ENCODE measurements at regions of chr18 and their contacts with region 1.

Region 1: DNA sequence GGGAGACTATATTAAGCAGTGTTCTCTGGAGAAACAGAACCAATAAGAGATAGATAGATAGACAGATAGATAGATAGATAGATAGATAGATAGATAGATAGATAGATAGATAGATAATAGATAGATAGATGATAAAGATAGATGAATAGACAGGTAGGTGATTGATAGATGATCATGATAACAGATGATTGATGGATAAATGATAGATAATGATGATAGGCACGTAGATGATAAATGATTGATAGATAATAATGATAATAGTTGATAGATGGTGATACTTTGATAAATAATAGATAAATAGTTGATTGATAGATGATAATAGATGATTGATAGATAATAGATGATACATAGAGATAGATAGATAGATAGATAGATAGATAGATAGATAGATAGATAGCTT is 48.5 kb downstream of the BOD1L2 start:
- DNase-seq: no peak
- ATAC-seq: no peak
- H3K4me3 ChIP-seq: no peak overlapping the region
- H3K4me3 Mint-ChIP-seq: no peak overlapping the region
- H3K27ac ChIP-seq: no peak overlapping the region
- H3K27ac Mint-ChIP-seq: no peak overlapping the region
- H3K4me1 ChIP-seq: no peaks in the 10 kb centered on the region
- H3K4me1 Mint-ChIP-seq: no peaks in the 10 kb centered on the region
- H3K27me3 ChIP-seq: peaks cover 0 to 23% (median 9%) of the 10 kb centered on the region in 4 experiments
- H3K27me3 Mint-ChIP-seq: peaks cover 37% of the 10 kb centered on the region
- CTCF ChIP-seq: no peak

Region 2: DNA sequence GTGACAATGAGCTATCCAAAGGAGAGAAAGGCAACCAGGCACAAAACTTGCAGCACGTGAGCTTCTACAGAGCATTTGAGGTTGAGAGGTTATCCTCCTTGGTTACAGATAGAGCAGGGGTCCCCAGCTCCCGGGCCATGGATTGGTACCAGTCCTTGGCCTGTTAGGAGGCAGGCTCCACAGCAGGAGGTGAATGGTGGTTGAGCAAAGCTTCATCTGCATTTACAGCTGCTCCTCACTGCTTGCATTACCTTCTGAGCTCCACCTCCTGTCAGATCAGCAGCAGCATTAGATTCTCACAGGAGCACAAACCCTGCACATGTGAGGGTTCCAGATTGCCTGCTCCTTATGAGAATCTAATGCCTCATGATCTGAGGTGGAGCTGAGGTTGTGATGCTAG is 99.2 kb after region 1 on chr18:
- CTCF ChIA-PET with region 1: no interaction called
- POLR2A ChIA-PET with region 1: no interaction called
- intact Hi-C with region 1: no loop called
- DNase-seq: no peak
- ATAC-seq: no peak
- H3K4me3 ChIP-seq: no peak overlapping the region
- H3K4me3 Mint-ChIP-seq: no peak overlapping the region
- H3K27ac ChIP-seq: no peak overlapping the region
- H3K27ac Mint-ChIP-seq: no peak overlapping the region
- H3K4me1 ChIP-seq: no peaks in the 10 kb centered on the region
- H3K4me1 Mint-ChIP-seq: no peaks in the 10 kb centered on the region
- H3K27me3 ChIP-seq: peaks cover 0 to 3% (median 1%) of the 10 kb centered on the region in 4 experiments
- H3K27me3 Mint-ChIP-seq: peaks cover 29% of the 10 kb centered on the region
- CTCF ChIP-seq: no peak

Region 3: GRCh38 chr18:57666818-57667497 is 471.6 kb after region 1 on chr18:
- CTCF ChIA-PET with region 1: no interaction called
- POLR2A ChIA-PET with region 1: interaction called, 11 read pairs
- intact Hi-C with region 1: no loop called
- DNase-seq: no peak
- ATAC-seq: no peak
- H3K4me3 ChIP-seq: no peak overlapping the region
- H3K4me3 Mint-ChIP-seq: peak overlapping the region; percentile 44
- H3K27ac ChIP-seq: no peak overlapping the region
- H3K27ac Mint-ChIP-seq: no peak overlapping the region
- H3K4me1 ChIP-seq: peaks cover 35 to 40% of the 10 kb centered on the region in 2 donors
- H3K4me1 Mint-ChIP-seq: peaks cover 61% of the 10 kb centered on the region
- H3K27me3 ChIP-seq: no peaks in the 10 kb centered on the region
- H3K27me3 Mint-ChIP-seq: no peaks in the 10 kb centered on the region
- CTCF ChIP-seq: no peak

Measured in B cell (primary cell).